ENCODE measurements at regions of chr2 and their contacts with region 1.

Region 1: DNA sequence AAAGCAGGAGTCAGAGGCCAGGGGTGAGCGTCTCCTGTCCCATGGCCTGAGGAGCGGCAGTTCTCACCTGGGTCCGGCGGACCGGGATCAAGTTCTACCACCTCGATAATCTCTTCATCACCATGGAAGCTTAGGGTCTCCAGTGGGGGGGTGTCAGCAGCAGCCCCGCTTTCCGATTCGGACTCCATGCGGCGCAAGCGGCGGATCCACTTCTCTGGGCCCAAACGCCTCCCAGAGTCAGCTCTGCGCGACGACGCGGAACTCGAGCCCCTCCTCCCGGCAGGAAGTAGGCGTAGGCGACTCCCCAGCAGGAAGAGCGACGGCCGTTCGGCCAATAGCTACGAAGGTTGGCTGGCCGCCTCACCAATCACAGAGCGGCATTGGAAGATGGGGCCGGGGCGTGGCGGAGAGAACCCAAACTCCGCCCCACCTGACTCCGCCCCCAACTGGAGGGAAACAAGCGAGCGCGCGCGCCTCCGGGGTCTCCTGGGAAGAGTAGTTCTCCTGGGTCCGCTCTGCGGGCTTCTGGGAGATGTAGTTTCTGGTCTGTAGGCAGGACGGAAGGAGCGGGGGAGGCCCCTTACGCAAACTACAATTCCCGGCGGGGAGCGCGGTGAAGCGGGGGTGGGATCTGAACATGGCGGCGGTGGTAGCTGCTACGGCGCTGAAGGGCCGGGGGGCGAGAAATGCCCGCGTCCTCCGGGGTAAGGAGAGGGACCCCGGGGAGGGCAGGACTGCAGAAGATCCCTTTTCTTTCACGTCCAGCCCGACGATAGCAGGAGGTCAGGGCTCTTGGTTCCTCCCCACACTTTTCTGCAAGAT is at the starts of genes AAMP and PNKD:
- DNase-seq: peak; percentile 100
- ATAC-seq: peak; percentile 83
- H3K4me3 ChIP-seq: peak within 1 kb of the TSS; percentile 69 to 99 (median 97)
- H3K4me3 Mint-ChIP-seq: peak within 1 kb of the TSS; percentile 84
- H3K27ac ChIP-seq: peak within 1 kb of the TSS; percentile 49 to 82
- H3K27ac Mint-ChIP-seq: peak within 1 kb of the TSS; percentile 86
- H3K4me1 ChIP-seq: peaks cover 36 to 53% of the 10 kb centered on the region in 2 donors
- H3K4me1 Mint-ChIP-seq: peaks cover 59% of the 10 kb centered on the region
- H3K27me3 ChIP-seq: no peaks in the 10 kb centered on the region
- H3K27me3 Mint-ChIP-seq: no peaks in the 10 kb centered on the region
- CTCF ChIP-seq: no peak
- total RNA-seq, gene AAMP: 62.7 and 65.7 TPM in 2 replicates
- total RNA-seq, gene PNKD: 29.7 and 30.7 TPM in 2 replicates

Region 2: GRCh38 chr2:217978536-217979165 is 291.5 kb before region 1 on chr2:
- CTCF ChIA-PET with region 1: no interaction called
- POLR2A ChIA-PET with region 1: no interaction called
- intact Hi-C with region 1: no loop called
- DNase-seq: no peak
- ATAC-seq: no peak
- H3K4me3 ChIP-seq: no peak overlapping the region
- H3K4me3 Mint-ChIP-seq: no peak overlapping the region
- H3K27ac ChIP-seq: no peak overlapping the region
- H3K27ac Mint-ChIP-seq: no peak overlapping the region
- H3K4me1 ChIP-seq: no peaks in the 10 kb centered on the region
- H3K4me1 Mint-ChIP-seq: no peaks in the 10 kb centered on the region
- H3K27me3 ChIP-seq: no peaks in the 10 kb centered on the region
- H3K27me3 Mint-ChIP-seq: peaks cover 9% of the 10 kb centered on the region
- CTCF ChIP-seq: no peak

Region 3: GRCh38 chr2:218257390-218257981 is 12.6 kb before region 1 on chr2:
- CTCF ChIA-PET with region 1: interaction called, 19 read pairs
- POLR2A ChIA-PET with region 1: interaction called, 6 read pairs
- intact Hi-C with region 1: loop called (anchors 1 kb)
- DNase-seq: peak; percentile 93
- ATAC-seq: peak; percentile 90
- H3K4me3 ChIP-seq: no peak overlapping the region
- H3K4me3 Mint-ChIP-seq: peak overlapping the region; percentile 86
- H3K27ac ChIP-seq: peak overlapping the region; percentile 61 to 85
- H3K27ac Mint-ChIP-seq: peak overlapping the region; percentile 98
- H3K4me1 ChIP-seq: peaks cover 48 to 57% of the 10 kb centered on the region in 2 donors
- H3K4me1 Mint-ChIP-seq: peaks cover 53% of the 10 kb centered on the region
- H3K27me3 ChIP-seq: no peaks in the 10 kb centered on the region
- H3K27me3 Mint-ChIP-seq: no peaks in the 10 kb centered on the region
- CTCF ChIP-seq: peak; percentile 67

Region 4: DNA sequence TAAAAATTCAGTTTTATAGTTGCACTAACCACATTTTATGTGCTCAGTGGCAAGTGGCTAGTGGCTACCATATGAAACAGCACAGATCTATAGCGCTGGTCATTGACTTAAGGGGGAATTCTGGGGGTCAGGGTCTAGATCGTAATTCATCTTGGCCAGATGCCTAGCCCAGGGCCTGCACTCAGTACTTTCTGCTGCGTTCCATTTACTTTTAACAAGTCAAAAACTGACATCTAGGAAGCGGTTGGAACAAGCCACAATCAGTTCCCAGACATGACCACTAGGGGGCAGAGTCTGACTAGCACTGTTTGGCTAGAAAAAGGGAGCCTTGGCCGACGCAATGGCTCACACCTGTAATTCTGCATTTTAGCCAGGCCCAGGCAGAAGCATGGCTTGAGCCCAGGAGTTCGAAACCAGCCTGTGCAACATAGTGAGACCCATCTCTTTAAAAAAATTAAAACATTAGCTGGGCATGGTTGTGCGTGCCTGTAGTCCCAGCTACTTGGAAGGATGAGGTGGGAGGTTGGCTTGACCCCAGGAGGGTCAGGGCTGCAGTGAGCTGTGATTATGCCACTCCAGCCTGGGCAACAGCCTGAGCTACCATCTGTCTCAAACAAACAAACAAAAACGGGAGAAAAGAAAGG is 31.2 kb after region 1 on chr2:
- CTCF ChIA-PET with region 1: interaction called, 331 read pairs
- POLR2A ChIA-PET with region 1: no interaction called
- intact Hi-C with region 1: loop called (anchors 1 kb)
- DNase-seq: peak; percentile 90
- ATAC-seq: peak; percentile 94
- H3K4me3 ChIP-seq: no peak overlapping the region
- H3K4me3 Mint-ChIP-seq: no peak overlapping the region
- H3K27ac ChIP-seq: no peak overlapping the region
- H3K27ac Mint-ChIP-seq: no peak overlapping the region
- H3K4me1 ChIP-seq: peaks cover 3 to 6% of the 10 kb centered on the region in 2 donors
- H3K4me1 Mint-ChIP-seq: peaks cover 7% of the 10 kb centered on the region
- H3K27me3 ChIP-seq: no peaks in the 10 kb centered on the region
- H3K27me3 Mint-ChIP-seq: no peaks in the 10 kb centered on the region
- CTCF ChIP-seq: peak; percentile 90

Region 5: DNA sequence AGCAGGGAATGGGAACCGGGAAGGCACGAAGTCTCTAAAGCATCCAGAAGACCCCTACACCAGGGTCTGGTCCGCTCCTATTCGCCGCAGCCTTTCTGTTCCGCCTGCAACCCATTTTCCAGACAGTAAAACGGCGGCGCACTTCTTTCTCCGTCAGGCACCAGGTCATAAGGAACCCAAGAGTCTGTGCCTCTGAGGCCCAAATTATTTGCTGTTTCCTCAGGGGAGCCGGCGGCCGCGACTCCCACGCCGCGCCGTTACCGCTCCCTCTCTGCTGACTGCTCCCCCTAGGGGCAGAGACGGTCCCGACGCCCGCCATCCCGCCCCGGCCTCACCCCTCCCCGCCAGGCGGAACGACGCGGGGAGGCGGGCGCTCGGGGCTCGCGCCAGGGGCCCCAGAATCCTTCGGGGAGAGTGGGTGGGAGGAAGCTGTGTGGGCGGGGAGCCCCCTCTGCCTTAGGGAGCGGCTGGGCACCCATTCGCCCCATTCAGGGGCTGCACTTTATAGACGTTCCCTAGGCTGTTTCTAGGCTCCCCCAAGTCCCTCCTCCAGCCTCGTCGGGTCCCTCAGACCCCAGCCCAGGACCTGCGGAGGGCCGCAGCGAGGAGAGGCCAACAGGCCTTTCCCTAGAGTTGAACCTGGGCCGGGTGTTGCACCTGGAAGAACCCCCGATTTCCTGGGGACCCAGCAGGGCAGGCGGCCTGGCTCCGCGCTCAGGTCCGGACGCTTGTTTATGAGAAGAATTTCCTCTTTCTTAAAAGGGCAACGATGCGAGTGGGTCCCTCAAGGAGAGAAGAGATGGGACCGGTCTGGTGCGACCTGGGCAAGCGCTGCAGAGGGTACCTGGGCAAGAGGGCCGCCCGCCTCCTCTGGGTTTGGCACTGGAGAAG is 125.9 kb after region 1 on chr2:
- CTCF ChIA-PET with region 1: interaction called, 77 read pairs
- POLR2A ChIA-PET with region 1: interaction called, 15 read pairs
- intact Hi-C with region 1: loop called (anchors 1 kb)
- DNase-seq: peak; percentile 98
- ATAC-seq: peak; percentile 69
- H3K4me3 ChIP-seq: peak overlapping the region; percentile 75 to 94 (median 89)
- H3K4me3 Mint-ChIP-seq: peak overlapping the region; percentile 96
- H3K27ac ChIP-seq: peak overlapping the region; percentile 88 to 89
- H3K27ac Mint-ChIP-seq: peak overlapping the region; percentile 99
- H3K4me1 ChIP-seq: peaks cover 35 to 61% of the 10 kb centered on the region in 2 donors
- H3K4me1 Mint-ChIP-seq: peaks cover 53% of the 10 kb centered on the region
- H3K27me3 ChIP-seq: no peaks in the 10 kb centered on the region
- H3K27me3 Mint-ChIP-seq: no peaks in the 10 kb centered on the region
- CTCF ChIP-seq: peak; percentile 83

Region 6: GRCh38 chr2:218671654-218672566 is 401.8 kb after region 1 on chr2 and contains the starts of genes RNF25 and STK36:
- CTCF ChIA-PET with region 1: no interaction called
- POLR2A ChIA-PET with region 1: no interaction called
- intact Hi-C with region 1: loop called (anchors 1 kb)
- DNase-seq: peak; percentile 85
- ATAC-seq: peak; percentile 95
- H3K4me3 ChIP-seq: peak within 1 kb of the TSS; percentile 66 to 96 (median 84)
- H3K4me3 Mint-ChIP-seq: peak within 1 kb of the TSS; percentile 97
- H3K27ac ChIP-seq: peak within 1 kb of the TSS; percentile 8 to 84
- H3K27ac Mint-ChIP-seq: peak within 1 kb of the TSS; percentile 91
- H3K4me1 ChIP-seq: peaks cover 14 to 15% of the 10 kb centered on the region in 2 donors
- H3K4me1 Mint-ChIP-seq: peaks cover 20% of the 10 kb centered on the region
- H3K27me3 ChIP-seq: no peaks in the 10 kb centered on the region
- H3K27me3 Mint-ChIP-seq: no peaks in the 10 kb centered on the region
- CTCF ChIP-seq: no peak
- total RNA-seq, gene RNF25: 31.7 and 31.8 TPM in 2 replicates
- total RNA-seq, gene STK36: 41.3 and 42.9 TPM in 2 replicates